Vagina (tissue), 2 donors: ENCODE measurements at regions of chr12 and their contacts with region 1.

Region 1: GRCh38 chr12:46895726-46896125 is 69.9 kb upstream of the SLC38A4 start:
- DNase-seq: no peak
- H3K4me3 ChIP-seq: no peak overlapping the region
- H3K27ac ChIP-seq: no peak overlapping the region
- H3K4me1 ChIP-seq: peaks cover 5% of the 10 kb centered on the region
- H3K27me3 ChIP-seq: no peaks in the 10 kb centered on the region
- CTCF ChIP-seq: no peak
- POLR2A ChIP-seq: no peak

Region 2: GRCh38 chr12:46915082-46915481 is 19.4 kb after region 1 on chr12:
- intact Hi-C with region 1: loop called (anchors 1 kb)
- DNase-seq: no peak
- H3K4me3 ChIP-seq: no peak overlapping the region
- H3K27ac ChIP-seq: no peak overlapping the region
- H3K4me1 ChIP-seq: no peaks in the 10 kb centered on the region
- H3K27me3 ChIP-seq: no peaks in the 10 kb centered on the region
- CTCF ChIP-seq: no peak
- POLR2A ChIP-seq: no peak